ENCODE measurements at regions of chr19 and their contacts with region 1.

Region 1: GRCh38 chr19:44304659-44305193 is at the start of gene ZNF235:
- DNase-seq: peak; percentile 82
- ATAC-seq: peak; percentile 98
- H3K4me3 ChIP-seq: peak within 1 kb of the TSS; percentile 69 to 87 (median 79)
- H3K4me3 Mint-ChIP-seq: peak within 1 kb of the TSS; percentile 96
- H3K27ac ChIP-seq: peak within 1 kb of the TSS; percentile 20 to 72
- H3K27ac Mint-ChIP-seq: peak within 1 kb of the TSS; percentile 91
- H3K4me1 ChIP-seq: peaks cover 9 to 15% of the 10 kb centered on the region in 2 donors
- H3K4me1 Mint-ChIP-seq: peaks cover 24% of the 10 kb centered on the region
- H3K27me3 ChIP-seq: no peaks in the 10 kb centered on the region
- H3K27me3 Mint-ChIP-seq: peaks cover 9% of the 10 kb centered on the region
- CTCF ChIP-seq: no peak
- total RNA-seq, gene ZNF235: 18.8 and 19.5 TPM in 2 replicates

Region 2: DNA sequence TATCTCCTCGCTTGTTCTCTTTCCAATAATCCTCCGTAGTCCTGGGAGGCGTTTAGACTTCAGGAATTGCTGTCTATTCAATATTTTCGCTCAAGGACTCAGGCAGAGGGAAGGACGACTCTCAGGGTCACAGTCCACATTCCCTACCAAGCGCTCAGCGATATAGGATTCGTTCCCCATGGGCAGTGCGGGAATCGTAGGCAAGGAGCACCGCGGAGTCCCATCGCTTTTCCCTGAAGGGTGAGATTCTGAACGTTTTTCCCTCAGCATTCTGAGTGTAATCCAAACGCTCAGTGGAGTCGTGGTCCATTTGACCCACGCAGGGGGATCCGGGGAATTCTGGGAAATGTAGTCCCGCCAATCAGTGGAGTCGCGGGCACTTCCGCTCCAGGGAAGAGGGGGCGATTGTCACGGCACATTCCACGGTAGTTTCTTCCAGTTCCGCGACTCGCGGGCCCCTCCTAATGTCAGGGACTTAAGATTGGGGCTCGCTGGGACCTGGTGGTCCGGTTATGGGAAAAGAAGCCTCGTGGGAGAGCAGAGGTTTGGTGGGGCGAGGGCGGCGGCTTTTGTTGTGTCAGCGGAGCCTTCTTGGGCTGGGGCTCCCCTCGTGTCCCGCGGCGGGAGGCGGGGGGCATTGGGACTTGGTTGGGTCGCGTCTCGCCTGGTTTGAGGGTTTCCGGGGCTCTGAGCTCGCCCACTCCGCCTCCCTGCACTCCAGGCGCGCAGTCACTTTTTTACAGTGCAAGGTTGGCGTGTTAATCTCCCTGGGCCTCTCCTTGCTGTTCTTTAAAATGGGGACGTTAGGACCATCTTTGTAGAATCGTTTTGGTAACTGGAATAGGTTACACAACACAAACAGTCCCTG is 163.3 kb before region 1 on chr19 and contains the start of gene ZNF234:
- CTCF ChIA-PET with region 1: no interaction called
- POLR2A ChIA-PET with region 1: interaction called, 3 read pairs
- intact Hi-C with region 1: loop called (anchors 1 kb)
- DNase-seq: peak; percentile 81
- ATAC-seq: peak; percentile 95
- H3K4me3 ChIP-seq: peak within 1 kb of the TSS; percentile 64 to 93 (median 81)
- H3K4me3 Mint-ChIP-seq: peak within 1 kb of the TSS; percentile 93
- H3K27ac ChIP-seq: peak within 1 kb of the TSS; percentile 61 to 77
- H3K27ac Mint-ChIP-seq: peak within 1 kb of the TSS; percentile 87
- H3K4me1 ChIP-seq: peaks cover 13 to 15% of the 10 kb centered on the region in 2 donors
- H3K4me1 Mint-ChIP-seq: peaks cover 27% of the 10 kb centered on the region
- H3K27me3 ChIP-seq: no peaks in the 10 kb centered on the region
- H3K27me3 Mint-ChIP-seq: no peaks in the 10 kb centered on the region
- CTCF ChIP-seq: no peak
- total RNA-seq, gene ZNF234: 24.1 and 27.5 TPM in 2 replicates

Region 3: DNA sequence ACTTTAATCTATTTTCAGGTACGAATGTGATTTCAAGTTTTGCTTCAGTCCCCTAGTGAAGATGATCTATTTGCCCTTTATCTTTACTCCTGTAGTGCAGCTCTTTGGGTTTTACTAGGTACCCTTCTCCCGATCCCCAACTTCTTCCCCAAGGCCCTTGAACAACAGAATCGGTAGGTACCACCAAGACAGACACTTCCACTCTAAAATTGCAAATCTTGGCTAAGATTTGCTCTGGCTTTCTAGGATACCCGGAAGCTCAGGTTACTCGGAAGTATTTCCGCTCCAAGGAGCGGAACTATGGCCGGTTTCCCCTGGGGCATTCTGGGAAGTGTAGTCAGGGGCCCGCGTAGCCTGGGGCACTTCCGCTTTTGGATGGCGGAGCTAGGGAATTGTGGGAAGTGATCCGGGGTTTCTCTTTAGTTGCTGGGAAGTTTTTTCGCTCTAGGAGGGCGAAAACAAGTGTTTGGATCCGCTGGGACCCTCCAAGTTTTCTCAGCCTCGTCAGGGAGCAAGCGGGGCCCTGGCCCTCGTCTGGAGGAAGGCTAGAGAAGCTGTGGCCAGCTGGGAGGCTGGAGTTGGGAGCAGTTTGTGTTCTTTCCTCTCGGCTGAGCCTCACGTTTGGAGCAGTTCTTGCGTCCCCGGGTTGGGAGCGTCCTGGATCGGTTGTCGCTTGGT is 97.5 kb before region 1 on chr19:
- CTCF ChIA-PET with region 1: no interaction called
- POLR2A ChIA-PET with region 1: interaction called, 5 read pairs
- intact Hi-C with region 1: loop called (anchors 1 kb)
- DNase-seq: peak; percentile 91
- ATAC-seq: peak; percentile 91
- H3K4me3 ChIP-seq: peak overlapping the region; percentile 70 to 93 (median 88)
- H3K4me3 Mint-ChIP-seq: peak overlapping the region; percentile 88
- H3K27ac ChIP-seq: peak overlapping the region; percentile 71 to 86
- H3K27ac Mint-ChIP-seq: peak overlapping the region; percentile 92
- H3K4me1 ChIP-seq: peaks cover 4 to 7% of the 10 kb centered on the region in 2 donors
- H3K4me1 Mint-ChIP-seq: peaks cover 11% of the 10 kb centered on the region
- H3K27me3 ChIP-seq: no peaks in the 10 kb centered on the region
- H3K27me3 Mint-ChIP-seq: peaks cover 13% of the 10 kb centered on the region
- CTCF ChIP-seq: no peak

Region 4: GRCh38 chr19:44212250-44212865 is 92.4 kb before region 1 on chr19 and contains the start of gene ZNF227:
- CTCF ChIA-PET with region 1: no interaction called
- POLR2A ChIA-PET with region 1: interaction called, 5 read pairs
- intact Hi-C with region 1: loop called (anchors 1 kb)
- DNase-seq: peak; percentile 85
- ATAC-seq: peak; percentile 94
- H3K4me3 ChIP-seq: peak within 1 kb of the TSS; percentile 85 to 93 (median 88)
- H3K4me3 Mint-ChIP-seq: peak within 1 kb of the TSS; percentile 96
- H3K27ac ChIP-seq: peak within 1 kb of the TSS; percentile 48 to 77
- H3K27ac Mint-ChIP-seq: peak within 1 kb of the TSS; percentile 93
- H3K4me1 ChIP-seq: peaks cover 14 to 15% of the 10 kb centered on the region in 2 donors
- H3K4me1 Mint-ChIP-seq: peaks cover 21% of the 10 kb centered on the region
- H3K27me3 ChIP-seq: no peaks in the 10 kb centered on the region
- H3K27me3 Mint-ChIP-seq: no peaks in the 10 kb centered on the region
- CTCF ChIP-seq: no peak
- total RNA-seq, gene ZNF227: 49.5 and 53.0 TPM in 2 replicates

Region 5: GRCh38 chr19:44258835-44259413 is 45.8 kb before region 1 on chr19:
- CTCF ChIA-PET with region 1: no interaction called
- POLR2A ChIA-PET with region 1: interaction called, 3 read pairs
- intact Hi-C with region 1: loop called (anchors 5 kb)
- DNase-seq: no peak
- ATAC-seq: no peak
- H3K4me3 ChIP-seq: no peak overlapping the region
- H3K4me3 Mint-ChIP-seq: peak overlapping the region; percentile 55
- H3K27ac ChIP-seq: no peak overlapping the region
- H3K27ac Mint-ChIP-seq: no peak overlapping the region
- H3K4me1 ChIP-seq: peaks cover 5 to 13% of the 10 kb centered on the region in 2 donors
- H3K4me1 Mint-ChIP-seq: peaks cover 12% of the 10 kb centered on the region
- H3K27me3 ChIP-seq: no peaks in the 10 kb centered on the region
- H3K27me3 Mint-ChIP-seq: no peaks in the 10 kb centered on the region
- CTCF ChIP-seq: no peak

Region 6: GRCh38 chr19:44401139-44402115 is 96.7 kb after region 1 on chr19 and contains the start of gene ZNF285:
- CTCF ChIA-PET with region 1: no interaction called
- POLR2A ChIA-PET with region 1: no interaction called
- intact Hi-C with region 1: loop called (anchors 1 kb)
- DNase-seq: peak; percentile 89
- ATAC-seq: peak; percentile 99
- H3K4me3 ChIP-seq: peak within 1 kb of the TSS; percentile 59 to 77 (median 73)
- H3K4me3 Mint-ChIP-seq: peak within 1 kb of the TSS; percentile 96
- H3K27ac ChIP-seq: no peak within 1 kb of the TSS
- H3K27ac Mint-ChIP-seq: peak within 1 kb of the TSS; percentile 72
- H3K4me1 ChIP-seq: peaks cover 0 to 13% of the 10 kb centered on the region in 2 donors
- H3K4me1 Mint-ChIP-seq: peaks cover 10% of the 10 kb centered on the region
- H3K27me3 ChIP-seq: peaks cover 0 to 4% (median 1%) of the 10 kb centered on the region in 4 experiments
- H3K27me3 Mint-ChIP-seq: peaks cover 5% of the 10 kb centered on the region
- CTCF ChIP-seq: no peak
- total RNA-seq, gene ZNF285: 7.6 and 7.9 TPM in 2 replicates

Region 7: GRCh38 chr19:44800461-44800860 is 495.7 kb after region 1 on chr19:
- CTCF ChIA-PET with region 1: no interaction called
- POLR2A ChIA-PET with region 1: no interaction called
- intact Hi-C with region 1: no loop called
- DNase-seq: peak; percentile 79
- ATAC-seq: peak; percentile 80
- H3K4me3 ChIP-seq: no peak overlapping the region
- H3K4me3 Mint-ChIP-seq: no peak overlapping the region
- H3K27ac ChIP-seq: no peak overlapping the region
- H3K27ac Mint-ChIP-seq: no peak overlapping the region
- H3K4me1 ChIP-seq: peaks cover 11 to 22% of the 10 kb centered on the region in 2 donors
- H3K4me1 Mint-ChIP-seq: peaks cover 8% of the 10 kb centered on the region
- H3K27me3 ChIP-seq: peaks cover 0 to 9% (median under 1%) of the 10 kb centered on the region in 4 experiments
- H3K27me3 Mint-ChIP-seq: peaks cover 25% of the 10 kb centered on the region
- CTCF ChIP-seq: peak; percentile 68

Measured in B cell (primary cell).